Caco-2 (cell line): ENCODE measurements at regions of chr6 and their contacts with region 1.

Region 1: DNA sequence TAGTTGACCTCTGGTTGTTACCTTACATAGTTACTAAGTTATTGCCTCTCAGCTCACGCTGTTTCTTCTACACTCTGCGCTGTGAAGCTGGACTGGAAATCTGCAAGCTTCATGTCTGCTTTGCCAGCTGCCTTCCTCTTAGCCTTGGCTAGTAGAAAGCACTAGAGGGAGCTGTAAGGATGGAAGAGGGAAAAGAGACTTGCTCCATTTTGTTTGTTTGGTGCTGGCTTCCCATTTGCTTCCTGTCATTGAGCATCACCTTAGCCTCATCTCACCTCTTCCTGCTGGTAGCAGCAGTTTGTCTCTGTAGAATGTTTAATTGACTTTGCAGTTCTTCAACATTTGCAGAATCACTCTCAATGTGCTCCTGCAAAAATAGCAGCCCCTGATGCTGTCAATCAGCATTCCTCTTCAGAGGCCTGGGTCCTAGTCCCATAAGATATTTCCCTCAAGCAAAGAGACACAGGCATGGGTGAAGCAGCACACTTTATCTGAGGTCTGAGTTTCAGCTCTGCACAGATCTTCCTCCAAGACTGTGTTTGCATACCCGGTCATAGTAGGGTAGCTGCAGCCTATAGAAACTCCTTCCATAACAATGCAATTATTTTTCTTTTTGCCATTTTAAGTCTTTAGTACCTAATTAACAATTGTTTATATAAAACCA is 302.2 kb upstream of the EPHA7 start:
- DNase-seq: peak in 1 of 2 experiments; percentile 19
- H3K4me3 ChIP-seq: no peak overlapping the region
- H3K4me3 Mint-ChIP-seq: no peak overlapping the region
- H3K27ac Mint-ChIP-seq: no peak overlapping the region
- H3K4me1 ChIP-seq: no peaks in the 10 kb centered on the region
- H3K4me1 Mint-ChIP-seq: no peaks in the 10 kb centered on the region
- H3K27me3 ChIP-seq: no peaks in the 10 kb centered on the region
- H3K27me3 Mint-ChIP-seq: no peaks in the 10 kb centered on the region
- CTCF ChIP-seq: peak in 1 of 2 experiments; percentile 23

Region 2: GRCh38 chr6:93759190-93759589 is 37.7 kb after region 1 on chr6:
- CTCF ChIA-PET with region 1: no interaction called
- POLR2A ChIA-PET with region 1: no interaction called
- intact Hi-C with region 1: no loop called
- DNase-seq: no peak
- H3K4me3 ChIP-seq: no peak overlapping the region
- H3K4me3 Mint-ChIP-seq: no peak overlapping the region
- H3K27ac Mint-ChIP-seq: no peak overlapping the region
- H3K4me1 ChIP-seq: no peaks in the 10 kb centered on the region
- H3K4me1 Mint-ChIP-seq: no peaks in the 10 kb centered on the region
- H3K27me3 ChIP-seq: no peaks in the 10 kb centered on the region
- H3K27me3 Mint-ChIP-seq: no peaks in the 10 kb centered on the region
- CTCF ChIP-seq: no peak

Region 3: DNA sequence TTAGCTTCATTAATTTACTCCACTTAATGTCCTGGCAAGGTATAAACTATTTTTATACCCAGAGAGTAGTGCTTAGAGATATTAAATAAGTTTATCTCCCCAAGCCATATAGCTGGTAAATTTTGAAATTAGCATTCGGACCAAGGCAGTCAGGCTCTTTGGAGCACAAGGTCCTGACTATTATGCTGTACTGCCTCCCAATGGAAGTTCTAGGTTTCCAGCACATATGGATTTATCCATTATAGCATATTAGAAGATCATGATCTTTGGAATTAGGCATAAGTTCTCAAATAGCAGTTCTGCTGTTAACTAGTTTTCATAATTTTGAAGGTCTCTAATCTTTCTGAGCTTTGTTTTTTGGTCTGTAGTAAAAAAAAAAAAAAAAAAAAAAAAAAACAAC is 533.2 kb after region 1 on chr6:
- CTCF ChIA-PET with region 1: no interaction called
- POLR2A ChIA-PET with region 1: no interaction called
- intact Hi-C with region 1: loop called (anchors 2 kb)
- DNase-seq: no peak
- H3K4me3 ChIP-seq: no peak overlapping the region
- H3K4me3 Mint-ChIP-seq: no peak overlapping the region
- H3K27ac Mint-ChIP-seq: no peak overlapping the region
- H3K4me1 ChIP-seq: no peaks in the 10 kb centered on the region
- H3K4me1 Mint-ChIP-seq: no peaks in the 10 kb centered on the region
- H3K27me3 ChIP-seq: no peaks in the 10 kb centered on the region
- H3K27me3 Mint-ChIP-seq: no peaks in the 10 kb centered on the region
- CTCF ChIP-seq: peak in 1 of 2 experiments; percentile 18